Endothelial cell of umbilical vein (primary cell): ENCODE measurements at regions of chr19 and their contacts with region 1.

Region 1: GRCh38 chr19:34963573-34964409 is at the start of gene ZNF792:
- DNase-seq: peak; percentile 79
- H3K4me3 ChIP-seq: peak within 1 kb of the TSS; percentile 58 to 85 (median 80)
- H3K27ac ChIP-seq: peak within 1 kb of the TSS; percentile 94
- H3K4me1 ChIP-seq: peaks cover 13% of the 10 kb centered on the region
- H3K27me3 ChIP-seq: no peaks in the 10 kb centered on the region
- CTCF ChIP-seq: no peak
- POLR2A ChIP-seq: peak; percentile 42
- total RNA-seq, gene ZNF792: 19.6 and 19.8 TPM in 2 replicates

Region 2: DNA sequence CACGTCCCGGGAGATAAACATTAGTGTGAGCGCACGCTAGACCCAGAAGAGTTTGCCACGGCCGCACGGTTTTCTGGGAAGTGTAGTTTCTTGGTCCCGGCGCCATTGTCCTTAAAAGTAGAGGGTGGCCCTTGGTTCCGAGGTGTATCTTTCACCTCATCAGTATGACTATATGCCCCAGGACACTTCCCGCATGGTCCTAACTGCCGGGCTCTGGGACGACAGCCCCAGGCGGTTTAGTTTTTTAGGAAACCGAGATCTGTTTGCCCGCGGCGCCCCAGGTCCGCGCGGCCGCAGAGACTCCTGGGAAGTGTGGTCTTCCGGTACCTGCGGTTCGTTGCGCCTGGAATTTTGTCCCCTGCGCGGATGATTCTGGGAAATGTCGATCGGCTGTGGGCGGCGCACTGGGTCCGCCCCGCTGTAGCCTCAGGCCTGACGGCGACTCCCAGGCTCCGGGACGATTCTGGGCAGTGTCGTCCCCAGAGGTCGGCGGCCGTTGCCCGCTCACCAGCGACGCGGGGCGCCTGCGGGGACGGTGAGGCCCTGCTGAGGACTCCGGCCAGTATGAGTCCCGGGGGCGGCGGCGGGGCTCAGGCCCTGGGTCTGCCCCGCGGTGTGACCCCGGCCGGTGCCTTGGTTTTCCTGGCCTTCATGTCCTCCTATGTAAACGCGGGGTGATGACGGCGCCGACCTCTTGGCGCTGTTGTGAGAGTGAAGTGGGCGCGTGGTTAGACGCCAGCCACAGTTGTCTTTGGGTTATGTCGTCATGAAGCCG is 229.8 kb before region 1 on chr19 and contains the start of gene ZNF181:
- CTCF ChIA-PET with region 1: no interaction called
- POLR2A ChIA-PET with region 1: no interaction called
- dilution Hi-C with region 1: no loop called
- intact Hi-C with region 1: loop called (anchors 2 kb)
- DNase-seq: peak; percentile 90
- H3K4me3 ChIP-seq: peak within 1 kb of the TSS; percentile 64 to 82 (median 75)
- H3K27ac ChIP-seq: peak within 1 kb of the TSS; percentile 85
- H3K4me1 ChIP-seq: peaks cover 3% of the 10 kb centered on the region
- H3K27me3 ChIP-seq: no peaks in the 10 kb centered on the region
- CTCF ChIP-seq: no peak
- POLR2A ChIP-seq: peak; percentile 54
- total RNA-seq, gene ZNF181: 5.0 and 5.1 TPM in 2 replicates

Region 3: DNA sequence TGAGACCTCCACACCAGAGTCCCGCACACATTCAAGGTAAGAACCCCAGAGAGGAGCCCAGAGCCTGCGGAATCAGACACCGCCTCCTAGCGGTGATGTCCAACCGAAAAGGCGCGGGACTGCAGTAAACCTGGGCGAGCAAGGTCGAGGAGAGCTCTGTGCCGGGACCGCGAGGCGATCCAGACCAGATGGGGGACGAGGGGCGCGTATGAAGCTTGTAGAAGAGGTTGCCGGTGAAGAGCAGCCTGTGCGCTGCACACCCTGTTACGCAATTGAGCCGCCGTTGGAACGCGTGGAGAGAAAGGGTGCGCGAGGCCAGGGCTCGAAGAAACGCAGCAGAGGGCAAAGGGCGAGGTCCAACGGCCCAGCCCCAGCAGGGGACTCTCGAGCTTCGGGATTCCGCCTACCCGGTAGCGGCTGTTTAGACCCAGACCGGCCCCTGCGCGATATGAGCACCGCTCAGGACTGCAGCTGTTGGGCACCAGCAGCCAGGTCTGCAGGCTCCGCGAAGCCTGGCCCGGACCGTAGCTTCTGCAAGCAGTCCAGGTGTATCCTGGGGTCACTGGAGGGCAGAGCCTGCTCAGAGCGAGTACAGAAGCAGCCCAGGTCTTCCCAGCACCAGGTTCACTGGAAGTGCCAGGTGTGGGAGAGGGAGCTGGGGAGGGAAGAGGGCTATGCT is 124.9 kb before region 1 on chr19:
- CTCF ChIA-PET with region 1: interaction called, 6 read pairs
- POLR2A ChIA-PET with region 1: no interaction called
- dilution Hi-C with region 1: no loop called
- intact Hi-C with region 1: loop called (anchors 2 kb)
- DNase-seq: peak; percentile 21
- H3K4me3 ChIP-seq: no peak overlapping the region
- H3K27ac ChIP-seq: no peak overlapping the region
- H3K4me1 ChIP-seq: peaks cover 14% of the 10 kb centered on the region
- H3K27me3 ChIP-seq: peaks cover 0 to 4% of the 10 kb centered on the region in 2 experiments
- CTCF ChIP-seq: peak; percentile 33 to 59
- POLR2A ChIP-seq: no peak

Region 4: DNA sequence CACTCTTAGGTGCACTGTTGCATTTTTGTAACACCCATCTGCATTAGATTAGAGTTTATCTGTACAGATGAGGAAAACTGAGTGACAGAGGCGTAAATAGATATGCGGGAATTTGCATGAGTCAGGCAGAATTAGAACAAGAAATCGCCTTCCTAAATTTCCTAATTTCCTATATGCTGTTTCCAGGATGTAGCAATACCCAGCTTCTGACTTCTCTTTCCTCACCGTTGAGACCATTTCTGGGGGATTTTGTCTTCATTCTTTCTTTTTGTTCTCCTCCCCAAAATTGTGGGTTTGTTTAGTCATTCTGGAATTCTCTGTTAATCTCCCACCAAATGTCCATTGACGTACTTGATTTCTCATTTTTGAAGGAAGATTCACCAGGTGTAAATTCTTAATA is 10.9 kb after region 1 on chr19:
- CTCF ChIA-PET with region 1: interaction called, 13 read pairs
- POLR2A ChIA-PET with region 1: no interaction called
- dilution Hi-C with region 1: no loop called
- intact Hi-C with region 1: no loop called
- DNase-seq: no peak
- H3K4me3 ChIP-seq: no peak overlapping the region
- H3K27ac ChIP-seq: no peak overlapping the region
- H3K4me1 ChIP-seq: no peaks in the 10 kb centered on the region
- H3K27me3 ChIP-seq: no peaks in the 10 kb centered on the region
- CTCF ChIP-seq: no peak
- POLR2A ChIP-seq: no peak

Region 5: GRCh38 chr19:35066691-35067563 is 103.1 kb after region 1 on chr19:
- CTCF ChIA-PET with region 1: no interaction called
- POLR2A ChIA-PET with region 1: no interaction called
- dilution Hi-C with region 1: no loop called
- intact Hi-C with region 1: no loop called
- DNase-seq: peak; percentile 72
- H3K4me3 ChIP-seq: no peak overlapping the region
- H3K27ac ChIP-seq: no peak overlapping the region
- H3K4me1 ChIP-seq: no peaks in the 10 kb centered on the region
- H3K27me3 ChIP-seq: no peaks in the 10 kb centered on the region
- CTCF ChIP-seq: peak; percentile 89 to 90
- POLR2A ChIP-seq: no peak

Region 6: DNA sequence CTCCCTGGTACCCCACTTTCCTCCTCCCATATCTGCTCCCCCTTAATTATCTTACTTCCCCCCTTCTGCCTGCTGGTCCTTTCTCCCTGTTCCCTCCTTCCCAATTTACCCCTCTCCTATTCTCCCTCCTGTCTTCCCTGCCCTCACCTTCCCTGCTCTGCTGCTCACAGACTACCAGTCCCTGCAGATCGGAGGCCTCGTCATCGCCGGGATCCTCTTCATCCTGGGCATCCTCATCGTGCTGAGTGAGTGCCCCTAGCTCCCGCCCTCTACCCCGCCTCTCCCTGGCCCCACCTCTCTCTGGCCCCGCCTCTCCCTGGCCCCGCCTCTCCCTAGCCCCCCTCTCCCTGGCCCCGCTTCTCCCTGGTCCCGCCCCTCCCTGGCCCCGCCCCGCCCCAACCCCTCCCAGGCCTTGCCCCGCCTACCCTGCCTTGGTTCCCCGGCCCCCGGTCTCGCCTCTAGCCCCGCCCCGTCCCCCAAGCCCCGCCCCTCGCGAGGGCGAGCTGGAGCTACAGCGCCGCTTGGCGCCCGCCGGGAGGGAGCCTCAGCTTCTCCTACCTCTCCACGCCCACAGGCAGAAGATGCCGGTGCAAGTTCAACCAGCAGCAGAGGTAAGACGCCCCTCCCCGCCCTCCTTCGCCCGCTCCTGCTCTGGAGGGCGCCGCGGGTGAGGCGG is 177.3 kb after region 1 on chr19:
- CTCF ChIA-PET with region 1: no interaction called
- POLR2A ChIA-PET with region 1: no interaction called
- dilution Hi-C with region 1: no loop called
- intact Hi-C with region 1: loop called (anchors 5 kb)
- DNase-seq: peak; percentile 79
- H3K4me3 ChIP-seq: no peak overlapping the region
- H3K27ac ChIP-seq: no peak overlapping the region
- H3K4me1 ChIP-seq: peaks cover 11% of the 10 kb centered on the region
- H3K27me3 ChIP-seq: peaks cover 16 to 17% of the 10 kb centered on the region in 2 experiments
- CTCF ChIP-seq: peak; percentile 5 to 63
- POLR2A ChIP-seq: no peak